Activated CD4-positive, alpha-beta memory T cell treated with anti-CD3 and anti-CD28 coated beads, Interleukin-2, amount 10 ng/mL, durations not matched to agents 7 days and 5 days (primary cell): ENCODE measurements at regions of chr10 and their contacts with region 1.

Region 1: GRCh38 chr10:74176380-74177139 is 25.5 kb downstream of the ADK start:
- DNase-seq: peak; percentile 98
- H3K4me3 Mint-ChIP-seq: peak overlapping the region; percentile 93
- H3K27ac Mint-ChIP-seq: peak overlapping the region; percentile 90
- H3K4me1 Mint-ChIP-seq: peaks cover 41% of the 10 kb centered on the region
- H3K27me3 Mint-ChIP-seq: no peaks in the 10 kb centered on the region

Region 2: DNA sequence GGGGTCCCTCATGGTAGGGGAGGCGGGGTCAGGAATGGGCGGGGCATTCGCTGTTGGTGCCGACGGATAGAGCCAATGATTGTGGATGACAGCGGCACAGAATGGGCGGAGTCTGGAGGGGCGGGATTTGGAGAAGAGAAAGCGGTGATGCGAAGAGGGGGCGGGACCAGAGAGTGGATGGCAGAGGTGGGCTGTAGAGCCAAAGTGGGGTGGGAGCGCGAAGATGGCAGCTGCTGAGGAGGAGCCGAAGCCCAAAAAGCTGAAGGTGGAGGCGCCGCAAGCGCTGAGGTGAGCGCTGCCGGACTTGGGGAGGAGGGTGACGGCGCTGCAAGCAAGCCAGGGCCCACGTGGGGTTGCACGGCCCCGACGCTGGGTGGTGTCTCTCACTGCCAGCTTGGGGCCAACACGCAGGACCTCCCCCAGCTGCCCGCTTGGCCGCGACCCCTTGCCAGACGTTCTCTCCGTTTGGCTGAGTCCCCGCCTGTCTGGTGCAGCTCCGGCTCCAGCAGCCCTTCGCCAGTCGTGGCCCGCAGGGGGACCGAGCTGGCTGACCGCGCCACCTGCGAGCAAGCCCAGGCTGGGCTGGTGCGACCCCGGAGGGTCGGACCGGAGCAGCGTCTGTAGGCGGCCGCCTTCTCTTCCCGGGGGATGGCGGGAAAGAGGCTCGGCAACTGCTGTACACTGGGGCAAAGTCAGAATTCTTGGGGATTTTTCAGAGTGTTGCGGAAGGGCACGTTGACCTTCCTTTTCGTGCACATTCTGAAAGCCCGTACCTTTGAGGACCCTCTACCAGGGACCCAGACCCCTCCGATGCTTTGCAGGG is 25.3 kb before region 1 on chr10 and contains the start of gene ADK:
- CTCF ChIA-PET with region 1: interaction called, 4 read pairs
- POLR2A ChIA-PET with region 1: interaction called, 34 read pairs
- DNase-seq: peak; percentile 100
- H3K4me3 Mint-ChIP-seq: no peak within 1 kb of the TSS
- H3K27ac Mint-ChIP-seq: peak within 1 kb of the TSS; percentile 48
- H3K4me1 Mint-ChIP-seq: peaks cover 38% of the 10 kb centered on the region
- H3K27me3 Mint-ChIP-seq: no peaks in the 10 kb centered on the region
- total RNA-seq, gene ADK: 29.3 to 31.8 TPM

Region 3: GRCh38 chr10:74165530-74165901 is 11.0 kb before region 1 on chr10:
- CTCF ChIA-PET with region 1: interaction called, 5 read pairs
- POLR2A ChIA-PET with region 1: interaction called, 10 read pairs
- DNase-seq: no peak
- H3K4me3 Mint-ChIP-seq: no peak overlapping the region
- H3K27ac Mint-ChIP-seq: no peak overlapping the region
- H3K4me1 Mint-ChIP-seq: peaks cover 10% of the 10 kb centered on the region
- H3K27me3 Mint-ChIP-seq: no peaks in the 10 kb centered on the region

Region 4: DNA sequence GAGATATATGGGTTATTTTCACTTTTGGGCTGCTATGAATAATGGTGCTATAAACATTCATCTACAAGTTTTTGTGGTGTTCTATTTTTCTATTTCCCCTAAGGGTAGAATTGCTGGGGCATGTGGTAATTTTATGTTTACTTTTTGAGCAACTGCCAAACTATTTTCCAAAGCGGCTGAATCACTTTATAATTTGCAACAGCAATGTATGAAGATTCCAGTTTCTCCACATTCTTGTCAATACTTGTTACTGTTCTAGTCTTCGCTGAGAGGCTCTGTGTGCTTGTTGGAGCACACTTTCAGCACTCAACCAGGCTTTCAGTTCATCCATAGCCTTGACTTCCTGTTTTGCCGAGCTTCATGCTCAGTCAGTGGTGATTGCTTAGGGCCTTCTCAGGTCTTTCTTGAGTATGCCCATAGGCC is 13.4 kb after region 1 on chr10:
- CTCF ChIA-PET with region 1: interaction called, 7 read pairs
- POLR2A ChIA-PET with region 1: interaction called, 15 read pairs
- DNase-seq: peak; percentile 29
- H3K4me3 Mint-ChIP-seq: peak overlapping the region; percentile 38
- H3K27ac Mint-ChIP-seq: peak overlapping the region; percentile 84
- H3K4me1 Mint-ChIP-seq: peaks cover 45% of the 10 kb centered on the region
- H3K27me3 Mint-ChIP-seq: no peaks in the 10 kb centered on the region